PC-9 (cell line): ENCODE measurements at regions of chr2 and their contacts with region 1.

Region 1: DNA sequence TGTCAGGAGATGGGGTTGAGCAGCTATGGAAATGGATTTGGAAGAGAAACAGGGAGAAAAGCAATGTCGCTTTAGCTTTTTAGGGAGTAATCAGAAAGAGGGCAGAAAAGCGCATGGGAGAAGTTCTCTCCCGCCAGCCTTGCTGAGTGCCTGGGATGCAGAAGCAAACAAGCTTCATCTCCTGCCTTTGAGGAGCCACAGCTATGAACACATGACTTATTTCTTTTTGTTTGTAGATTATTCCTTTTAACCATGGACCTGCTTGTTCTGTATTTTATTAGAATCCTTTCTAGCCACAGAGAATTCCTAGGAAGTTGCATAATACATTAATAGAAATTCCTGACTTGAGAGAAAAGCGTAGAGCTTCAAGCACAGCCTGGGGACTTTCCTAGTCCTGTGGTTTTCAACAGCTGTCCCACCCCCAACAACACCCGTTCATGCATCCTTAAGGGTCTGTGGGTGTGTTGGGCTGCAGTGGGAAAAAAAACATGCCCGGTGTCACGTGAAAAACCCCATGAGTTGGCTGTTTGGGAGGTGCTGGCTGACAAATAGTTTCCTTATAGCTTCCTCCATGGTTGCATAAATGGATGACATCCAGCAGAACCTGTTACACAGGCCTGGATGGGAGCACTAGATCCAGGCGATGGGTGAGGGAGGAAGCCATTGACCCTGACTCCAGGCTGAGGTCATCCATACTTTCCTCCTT is 14.9 kb downstream of the SLC9A4 start:
- DNase-seq: peak; percentile 87 to 99
- H3K4me3 ChIP-seq: peak overlapping the region; percentile 3; the same call in 1 of the 2 replicates
- H3K27ac ChIP-seq: peak overlapping the region; percentile 91
- H3K4me1 ChIP-seq: peaks cover 38% of the 10 kb centered on the region
- H3K27me3 ChIP-seq: no peaks in the 10 kb centered on the region
- CTCF ChIP-seq: no peak

Region 2: GRCh38 chr2:102417946-102418345 is 70.0 kb before region 1 on chr2:
- CTCF ChIA-PET with region 1: no interaction called
- POLR2A ChIA-PET with region 1: no interaction called
- intact Hi-C with region 1: no loop called
- DNase-seq: no peak
- H3K4me3 ChIP-seq: no peak overlapping the region
- H3K27ac ChIP-seq: no peak overlapping the region
- H3K4me1 ChIP-seq: no peaks in the 10 kb centered on the region
- H3K27me3 ChIP-seq: no peaks in the 10 kb centered on the region
- CTCF ChIP-seq: no peak

Region 3: DNA sequence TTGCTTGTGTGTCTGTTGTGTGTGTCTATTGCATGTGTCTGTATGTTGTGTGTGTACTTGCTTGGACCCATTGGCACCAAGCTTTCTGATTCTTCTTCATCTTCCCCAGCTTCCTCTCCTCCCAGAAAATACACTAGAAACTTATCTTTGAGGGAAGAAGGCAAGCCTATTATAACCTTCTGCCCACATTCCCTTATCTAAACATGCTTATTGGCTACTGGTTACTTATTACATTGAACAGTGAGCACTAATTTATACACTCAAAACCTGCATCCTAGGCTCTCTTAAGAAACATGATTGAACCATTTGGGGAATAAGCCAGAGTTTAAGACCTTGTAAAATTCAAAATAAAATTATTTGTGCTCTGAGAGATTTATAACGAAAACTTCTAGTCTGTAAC is 11.6 kb after region 1 on chr2:
- CTCF ChIA-PET with region 1: no interaction called
- POLR2A ChIA-PET with region 1: interaction called, 12 read pairs
- intact Hi-C with region 1: no loop called
- DNase-seq: no peak
- H3K4me3 ChIP-seq: no peak overlapping the region
- H3K27ac ChIP-seq: no peak overlapping the region
- H3K4me1 ChIP-seq: peaks cover 10% of the 10 kb centered on the region
- H3K27me3 ChIP-seq: no peaks in the 10 kb centered on the region
- CTCF ChIP-seq: no peak

Region 4: DNA sequence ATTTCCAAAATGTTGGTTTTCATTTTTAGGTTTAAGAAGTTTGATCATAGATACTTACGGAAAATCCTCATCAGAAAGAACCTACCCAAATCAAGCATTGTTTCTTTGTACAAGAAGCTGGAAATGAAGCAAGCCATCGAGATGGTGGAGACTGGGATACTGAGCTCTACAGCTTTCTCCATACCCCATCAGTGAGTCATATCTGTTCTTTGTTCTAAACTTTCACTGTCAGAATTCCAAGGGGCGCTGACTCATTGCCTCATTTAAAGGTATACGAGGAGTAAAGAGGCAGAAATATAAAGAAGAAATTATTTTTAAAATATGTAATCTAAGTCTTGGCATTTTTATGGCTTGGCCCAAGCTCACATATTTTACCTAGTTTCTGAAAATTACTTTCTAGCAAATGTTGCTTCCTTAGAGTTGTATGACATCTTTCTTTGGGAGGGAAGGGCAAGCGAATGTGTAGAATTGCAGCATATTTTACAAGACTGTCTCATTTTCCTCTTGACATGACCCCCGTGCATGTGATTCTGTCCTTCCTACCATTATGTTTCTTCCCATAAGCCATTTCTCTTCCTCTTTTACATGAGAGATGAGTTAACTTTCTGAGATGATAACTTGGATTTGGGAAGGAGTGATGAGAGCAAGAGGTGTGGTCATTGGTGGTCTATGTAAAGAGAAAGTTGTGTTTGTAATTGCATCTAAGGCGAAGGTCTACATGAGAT is 26.3 kb after region 1 on chr2:
- CTCF ChIA-PET with region 1: no interaction called
- POLR2A ChIA-PET with region 1: no interaction called
- intact Hi-C with region 1: loop called (anchors 1 kb)
- DNase-seq: peak; percentile 63 to 93
- H3K4me3 ChIP-seq: 0 out of 2 replicates have a peak overlapping the region, but pooled peaks have one; percentile 30
- H3K27ac ChIP-seq: peak overlapping the region; percentile 76
- H3K4me1 ChIP-seq: peaks cover 33% of the 10 kb centered on the region
- H3K27me3 ChIP-seq: no peaks in the 10 kb centered on the region
- CTCF ChIP-seq: no peak

Region 5: GRCh38 chr2:102585847-102586431 is 98.0 kb after region 1 on chr2:
- CTCF ChIA-PET with region 1: no interaction called
- POLR2A ChIA-PET with region 1: interaction called, 15 read pairs
- intact Hi-C with region 1: loop called (anchors 1 kb)
- DNase-seq: peak; percentile 62 to 81
- H3K4me3 ChIP-seq: no peak overlapping the region
- H3K27ac ChIP-seq: peak overlapping the region; percentile 4; the same call in 1 of the 2 replicates
- H3K4me1 ChIP-seq: peaks cover 20% of the 10 kb centered on the region
- H3K27me3 ChIP-seq: no peaks in the 10 kb centered on the region
- CTCF ChIP-seq: no peak